H1 (cell line): ENCODE measurements at regions of chr10 and their contacts with region 1.

Region 1: GRCh38 chr10:12782537-12782936 is 219.0 kb downstream of the CCDC3 start:
- DNase-seq: peak in 1 of 2 experiments; percentile 86
- H3K4me3 ChIP-seq: no peak overlapping the region
- H3K27ac ChIP-seq: no peak overlapping the region
- H3K4me1 ChIP-seq: no peaks in the 10 kb centered on the region
- H3K27me3 ChIP-seq: no peaks in the 10 kb centered on the region
- CTCF ChIP-seq: peak; percentile 70 to 90 (median 82)
- EP300 ChIP-seq: no peak
- POLR2A ChIP-seq: no peak
- RAD21 ChIP-seq: peak; percentile 58 to 67

Region 2: GRCh38 chr10:12741360-12741804 is 41.2 kb before region 1 on chr10:
- CTCF ChIA-PET with region 1: interaction called, 12 read pairs
- POLR2A ChIA-PET with region 1: no interaction called
- DNase-seq: no peak
- H3K4me3 ChIP-seq: no peak overlapping the region
- H3K27ac ChIP-seq: no peak overlapping the region
- H3K4me1 ChIP-seq: peaks cover 0 to 2% (median 0%) of the 10 kb centered on the region in 4 experiments; a peak in 3 of 7 replicates
- H3K27me3 ChIP-seq: no peaks in the 10 kb centered on the region
- CTCF ChIP-seq: no peak
- EP300 ChIP-seq: no peak
- POLR2A ChIP-seq: no peak
- RAD21 ChIP-seq: no peak

Region 3: GRCh38 chr10:12750525-12751201 is 31.9 kb before region 1 on chr10:
- CTCF ChIA-PET with region 1: interaction called, 10 read pairs
- POLR2A ChIA-PET with region 1: no interaction called
- DNase-seq: no peak
- H3K4me3 ChIP-seq: no peak overlapping the region
- H3K27ac ChIP-seq: no peak overlapping the region
- H3K4me1 ChIP-seq: no peaks in the 10 kb centered on the region; a peak in 1 of 7 replicates
- H3K27me3 ChIP-seq: no peaks in the 10 kb centered on the region
- CTCF ChIP-seq: no peak
- EP300 ChIP-seq: no peak
- POLR2A ChIP-seq: no peak
- RAD21 ChIP-seq: no peak

Region 4: GRCh38 chr10:12768156-12769100 is 14.1 kb before region 1 on chr10:
- CTCF ChIA-PET with region 1: interaction called, 21 read pairs
- POLR2A ChIA-PET with region 1: no interaction called
- DNase-seq: peak in 1 of 2 experiments; percentile 50
- H3K4me3 ChIP-seq: peak overlapping the region in 2 of 4 experiments; percentile 20 to 46; a peak in 3 of 8 replicates
- H3K27ac ChIP-seq: no peak overlapping the region
- H3K4me1 ChIP-seq: peaks cover 12 to 32% (median 25%) of the 10 kb centered on the region in 4 experiments
- H3K27me3 ChIP-seq: no peaks in the 10 kb centered on the region; a peak in 1 of 7 replicates
- CTCF ChIP-seq: no peak
- EP300 ChIP-seq: no peak
- POLR2A ChIP-seq: no peak
- RAD21 ChIP-seq: no peak

Region 5: GRCh38 chr10:12800302-12800701 is 17.8 kb after region 1 on chr10:
- CTCF ChIA-PET with region 1: interaction called, 29 read pairs
- POLR2A ChIA-PET with region 1: no interaction called
- DNase-seq: no peak
- H3K4me3 ChIP-seq: no peak overlapping the region
- H3K27ac ChIP-seq: no peak overlapping the region
- H3K4me1 ChIP-seq: peaks cover 0 to 11% (median 4%) of the 10 kb centered on the region in 4 experiments; a peak in 3 of 7 replicates
- H3K27me3 ChIP-seq: no peaks in the 10 kb centered on the region
- CTCF ChIP-seq: peak; percentile 32 to 61 (median 55)
- EP300 ChIP-seq: no peak
- POLR2A ChIP-seq: no peak
- RAD21 ChIP-seq: peak; percentile 23 to 48; a peak in 2 of 4 replicates

Region 6: GRCh38 chr10:12806228-12807095 is 23.9 kb after region 1 on chr10:
- CTCF ChIA-PET with region 1: interaction called, 29 read pairs
- POLR2A ChIA-PET with region 1: no interaction called
- DNase-seq: no peak
- H3K4me3 ChIP-seq: no peak overlapping the region
- H3K27ac ChIP-seq: no peak overlapping the region
- H3K4me1 ChIP-seq: no peaks in the 10 kb centered on the region
- H3K27me3 ChIP-seq: no peaks in the 10 kb centered on the region
- CTCF ChIP-seq: no peak
- EP300 ChIP-seq: no peak
- POLR2A ChIP-seq: no peak
- RAD21 ChIP-seq: no peak

Region 7: DNA sequence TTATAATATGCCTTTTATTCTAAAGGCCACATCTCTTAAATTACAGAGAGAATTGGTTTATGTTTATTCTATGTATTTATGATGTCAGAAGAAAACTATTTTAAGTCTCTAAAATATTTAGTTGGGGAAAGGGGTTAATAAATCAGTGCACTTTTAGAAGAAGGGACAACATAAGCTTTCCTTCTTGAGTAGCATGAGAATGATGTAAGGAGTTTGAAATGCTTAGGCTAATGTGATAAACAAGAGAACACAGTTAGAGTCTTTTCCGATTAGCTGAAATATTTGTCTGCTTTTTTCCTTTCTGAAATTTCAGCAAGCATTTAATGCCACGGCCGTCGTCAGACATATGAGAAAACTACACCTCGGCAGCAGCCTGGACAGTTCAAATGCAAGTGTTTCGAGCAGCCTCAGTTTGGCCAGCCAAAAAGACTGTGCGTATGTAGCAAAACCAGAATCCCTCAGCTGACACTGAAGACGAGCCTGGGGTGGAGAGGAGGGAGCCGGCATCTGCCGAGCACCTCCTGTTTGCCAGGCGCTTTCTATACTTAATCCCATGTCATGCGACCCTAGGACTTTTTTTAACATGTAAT is 42.8 kb after region 1 on chr10:
- CTCF ChIA-PET with region 1: interaction called, 19 read pairs
- POLR2A ChIA-PET with region 1: no interaction called
- DNase-seq: no peak
- H3K4me3 ChIP-seq: no peak overlapping the region
- H3K27ac ChIP-seq: no peak overlapping the region
- H3K4me1 ChIP-seq: no peaks in the 10 kb centered on the region
- H3K27me3 ChIP-seq: no peaks in the 10 kb centered on the region
- CTCF ChIP-seq: no peak
- EP300 ChIP-seq: no peak
- POLR2A ChIP-seq: no peak
- RAD21 ChIP-seq: no peak

Region 8: GRCh38 chr10:13016426-13016825 is 233.9 kb after region 1 on chr10:
- CTCF ChIA-PET with region 1: no interaction called
- POLR2A ChIA-PET with region 1: no interaction called
- DNase-seq: no peak
- H3K4me3 ChIP-seq: no peak overlapping the region
- H3K27ac ChIP-seq: no peak overlapping the region
- H3K4me1 ChIP-seq: no peaks in the 10 kb centered on the region
- H3K27me3 ChIP-seq: no peaks in the 10 kb centered on the region
- CTCF ChIP-seq: no peak
- EP300 ChIP-seq: no peak
- POLR2A ChIP-seq: no peak
- RAD21 ChIP-seq: no peak